Left lung (tissue), 14 donors: ENCODE measurements at regions of chr11 and their contacts with region 1.

Region 1: DNA sequence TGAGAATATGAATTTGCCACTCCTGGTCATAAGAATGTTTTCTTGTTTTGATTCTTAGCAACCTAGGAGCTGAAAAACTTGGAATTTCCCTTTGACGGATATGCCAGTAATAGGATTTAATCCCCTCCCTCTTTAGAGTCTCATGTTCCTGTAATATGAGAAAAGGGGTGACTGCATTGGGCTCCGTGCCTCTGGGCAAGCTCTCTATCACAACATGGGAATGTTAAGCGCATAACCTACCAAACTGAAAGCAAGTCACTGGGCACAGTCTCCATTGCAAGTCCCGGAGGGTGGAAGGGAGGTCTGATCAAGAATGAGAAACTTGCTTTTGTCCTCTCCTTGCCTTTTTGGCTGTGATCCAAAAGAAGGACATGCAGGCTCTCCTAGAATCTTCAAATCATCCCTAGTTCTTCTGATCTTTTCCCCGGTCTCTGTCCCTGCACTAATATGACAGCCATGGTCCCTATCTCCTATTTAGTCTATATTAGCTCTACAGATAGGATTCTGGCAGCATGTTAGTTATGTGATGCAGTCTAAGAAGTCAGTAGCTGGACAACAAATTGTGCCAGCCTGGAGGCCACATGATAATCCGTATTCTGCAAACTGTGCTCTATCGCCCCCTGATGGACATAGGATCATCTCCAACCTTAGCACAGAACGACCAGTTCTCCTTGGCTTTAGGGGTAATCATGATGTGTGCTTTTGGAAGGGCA is 11.7 kb downstream of the OR10D3 start:
- DNase-seq: peak in 1 of 4 donors; percentile 27
- ATAC-seq: peak; percentile 93
- H3K4me3 ChIP-seq: no peak overlapping the region
- H3K27ac ChIP-seq: peak overlapping the region in 1 of 2 donors; percentile 46
- H3K4me1 ChIP-seq: peaks cover 0 to 5% of the 10 kb centered on the region in 2 donors
- H3K27me3 ChIP-seq: no peaks in the 10 kb centered on the region
- CTCF ChIP-seq: peak; percentile 59 to 64

Region 2: GRCh38 chr11:124070915-124071635 is 123.8 kb before region 1 on chr11:
- intact Hi-C with region 1: loop called in 1 of 2 experiments (anchors 10 kb)
- DNase-seq: peak; percentile 66 to 86 (median 72)
- ATAC-seq: peak; percentile 83
- H3K4me3 ChIP-seq: no peak overlapping the region
- H3K27ac ChIP-seq: peak overlapping the region in 1 of 2 donors; percentile 38
- H3K4me1 ChIP-seq: peaks cover 6 to 20% of the 10 kb centered on the region in 2 donors
- H3K27me3 ChIP-seq: peaks cover 0 to 36% of the 10 kb centered on the region in 2 donors
- CTCF ChIP-seq: peak; percentile 66 to 76